Activated T-helper 1 cell treated with anti-CD3 and anti-CD28 coated beads, Interleukin-12 subunit alpha, Interleukin-12 subunit beta, Interleukin-2, Interleukin-4 antibody, amounts not matched to agents 30 ng/mL and 10 ng/mL and 1 ng/mL, durations not matched to agents 14 hours and 24 hours and 36 hours (primary cell): ENCODE measurements at regions of chr10 and their contacts with region 1.

Region 1: GRCh38 chr10:3757638-3758490 is 27.1 kb downstream of the KLF6 start:
- DNase-seq: peak; percentile 66
- H3K4me3 Mint-ChIP-seq: peak overlapping the region; percentile 78
- H3K27ac Mint-ChIP-seq: peak overlapping the region; percentile 100
- H3K4me1 Mint-ChIP-seq: peaks cover 84% of the 10 kb centered on the region
- H3K27me3 Mint-ChIP-seq: no peaks in the 10 kb centered on the region

Region 2: DNA sequence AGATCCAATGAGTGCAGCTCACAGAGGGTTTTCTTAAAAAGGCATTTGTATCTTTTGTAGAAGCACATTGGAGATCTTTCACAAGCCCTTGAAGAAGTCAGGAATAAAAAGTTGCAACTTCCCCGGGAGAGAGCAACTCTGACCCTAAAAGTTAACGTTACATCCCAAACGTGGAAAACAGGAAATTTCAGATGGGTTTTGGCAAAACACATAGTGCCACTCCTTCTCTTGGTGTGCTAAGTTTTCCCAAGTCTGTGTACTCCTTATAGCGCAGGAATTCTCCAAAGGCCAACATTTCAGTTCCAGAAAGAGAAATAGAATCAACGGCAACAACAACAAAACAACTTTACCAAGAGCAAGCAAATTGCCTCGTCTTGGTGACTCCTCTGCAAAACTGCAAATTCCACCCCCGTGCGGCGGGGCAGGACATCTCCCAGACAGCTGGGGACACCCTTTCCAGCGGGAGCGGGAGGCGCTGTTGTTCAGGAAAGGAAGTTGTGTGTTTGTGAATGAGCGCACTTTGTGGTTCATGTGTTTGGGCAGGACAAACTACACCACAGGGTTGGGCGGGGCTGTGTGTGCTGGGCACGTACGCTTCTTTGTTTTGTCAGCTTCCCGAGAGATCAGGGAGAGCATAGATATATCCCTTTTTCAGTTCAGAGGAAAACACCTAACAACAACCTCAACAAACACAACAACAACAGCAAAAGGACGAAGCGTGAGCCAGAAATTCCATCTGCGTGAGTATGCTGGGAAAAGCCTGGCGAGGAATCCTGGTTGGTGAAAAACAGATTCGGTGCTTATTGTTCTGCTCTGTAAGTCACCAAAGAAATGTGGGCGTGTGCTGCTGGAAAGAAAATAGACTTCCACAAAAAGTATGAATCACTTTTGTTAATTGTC is 290.6 kb before region 1 on chr10:
- intact Hi-C with region 1: loop called (anchors 5 kb)
- DNase-seq: no peak
- H3K4me3 Mint-ChIP-seq: peak overlapping the region; percentile 62
- H3K27ac Mint-ChIP-seq: peak overlapping the region; percentile 90
- H3K4me1 Mint-ChIP-seq: peaks cover 53% of the 10 kb centered on the region
- H3K27me3 Mint-ChIP-seq: no peaks in the 10 kb centered on the region

Region 3: DNA sequence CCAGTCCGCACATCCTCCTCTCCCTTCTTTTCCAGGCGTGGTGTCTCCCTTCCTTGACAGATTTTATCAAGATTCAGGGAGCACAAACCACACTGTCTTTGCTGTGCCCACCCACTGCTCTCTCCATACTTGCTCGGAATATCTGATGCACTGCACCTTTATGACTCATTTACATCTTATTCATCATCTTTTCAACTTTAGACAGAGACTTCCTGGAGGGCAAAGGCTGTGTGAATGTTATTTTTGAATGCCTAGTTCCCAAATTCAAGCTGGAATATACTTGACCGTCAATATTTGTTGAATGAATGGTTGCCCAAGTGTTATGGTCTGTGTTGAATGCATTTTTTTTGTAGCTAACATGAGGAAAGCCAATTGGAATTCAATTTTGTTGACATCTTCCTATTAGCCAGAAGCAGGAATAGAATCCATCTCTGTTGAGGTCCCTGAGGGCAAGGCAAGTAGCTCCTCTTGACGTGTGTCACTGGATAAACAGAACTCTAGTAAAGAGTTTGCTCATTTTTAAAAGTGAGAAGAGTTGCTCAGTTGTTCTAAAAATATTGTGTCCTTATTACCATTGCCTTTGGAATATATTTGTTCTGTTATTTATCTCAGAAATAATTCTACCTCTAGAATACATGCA is 67.9 kb before region 1 on chr10:
- intact Hi-C with region 1: loop called (anchors 5 kb)
- DNase-seq: no peak
- H3K4me3 Mint-ChIP-seq: no peak overlapping the region
- H3K27ac Mint-ChIP-seq: peak overlapping the region; percentile 72
- H3K4me1 Mint-ChIP-seq: peaks cover 13% of the 10 kb centered on the region
- H3K27me3 Mint-ChIP-seq: peaks cover 2% of the 10 kb centered on the region

Region 4: DNA sequence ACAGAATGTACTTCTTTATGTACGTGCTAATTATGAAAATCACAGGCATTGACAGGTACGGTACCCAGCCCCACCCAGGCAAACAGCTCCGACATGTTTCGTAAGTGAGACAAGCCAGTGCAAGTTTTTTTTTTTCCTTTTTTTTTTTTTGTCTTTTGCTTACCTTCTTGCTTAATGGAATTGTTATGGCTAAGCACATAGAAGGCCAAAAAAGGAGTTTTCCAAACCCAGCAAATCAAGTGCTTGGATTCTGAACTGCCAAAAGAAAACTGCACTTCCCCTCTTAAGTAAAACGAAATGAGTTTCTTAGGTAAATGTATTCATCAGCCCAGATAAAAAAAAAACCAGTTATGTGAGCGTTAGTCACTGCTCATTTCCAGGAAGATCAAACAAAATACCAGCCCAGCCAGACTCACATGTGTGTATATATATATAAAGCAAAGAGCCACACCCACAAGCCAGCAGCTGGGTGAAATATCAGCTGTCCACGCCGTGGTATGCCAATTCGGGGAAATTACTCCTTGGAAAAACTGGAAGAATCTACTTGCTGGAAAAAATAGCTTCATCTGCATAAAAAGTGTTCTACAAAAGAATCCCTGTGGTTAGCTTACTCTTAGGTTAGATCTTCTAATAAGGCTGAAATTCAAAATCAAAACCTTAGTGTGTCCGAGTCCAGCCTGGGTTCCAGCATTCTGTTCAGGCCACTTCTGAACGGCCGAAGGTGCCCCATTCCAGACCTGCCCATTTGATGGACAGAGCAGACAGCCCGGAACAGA is 19.1 kb after region 1 on chr10:
- intact Hi-C with region 1: loop called (anchors 1 kb)
- DNase-seq: peak; percentile 60
- H3K4me3 Mint-ChIP-seq: peak overlapping the region; percentile 37
- H3K27ac Mint-ChIP-seq: peak overlapping the region; percentile 53
- H3K4me1 Mint-ChIP-seq: peaks cover 81% of the 10 kb centered on the region
- H3K27me3 Mint-ChIP-seq: no peaks in the 10 kb centered on the region

Region 5: DNA sequence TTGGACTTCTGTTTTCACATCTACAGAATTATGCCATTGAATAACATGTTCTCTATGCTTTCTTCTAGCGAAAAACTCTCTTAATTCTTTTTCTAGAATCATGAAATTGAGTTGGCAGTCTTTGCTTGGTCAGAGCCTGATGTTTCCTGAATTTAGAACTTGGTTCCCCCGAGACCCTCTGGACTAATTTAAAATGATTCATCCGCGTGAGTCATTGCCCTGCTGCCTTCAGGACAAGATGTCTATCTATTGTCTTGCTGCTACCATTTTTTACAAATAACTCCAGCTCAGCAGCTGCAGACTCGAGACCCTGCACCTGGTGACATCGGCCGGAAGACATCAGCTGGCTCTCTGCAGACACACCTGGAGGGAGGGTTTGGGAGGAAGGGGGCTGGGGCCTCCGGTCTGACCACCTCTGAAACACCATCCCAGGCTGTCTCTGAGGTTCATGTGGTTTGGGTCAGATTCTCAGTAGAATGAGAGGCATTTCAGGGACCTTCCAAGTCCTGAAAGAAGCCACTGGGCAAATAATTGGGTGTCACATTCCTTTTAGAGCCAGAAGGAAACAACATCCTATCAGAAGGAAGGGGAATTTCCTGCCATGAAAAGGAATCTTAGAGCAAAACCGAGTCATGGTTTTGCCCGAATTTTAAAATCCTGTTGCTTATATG is 48.1 kb after region 1 on chr10:
- intact Hi-C with region 1: loop called (anchors 1 kb)
- DNase-seq: no peak
- H3K4me3 Mint-ChIP-seq: peak overlapping the region; percentile 70
- H3K27ac Mint-ChIP-seq: peak overlapping the region; percentile 99
- H3K4me1 Mint-ChIP-seq: peaks cover 76% of the 10 kb centered on the region
- H3K27me3 Mint-ChIP-seq: no peaks in the 10 kb centered on the region

Region 6: GRCh38 chr10:3873728-3874461 is 116.0 kb after region 1 on chr10:
- intact Hi-C with region 1: loop called (anchors 2 kb)
- DNase-seq: no peak
- H3K4me3 Mint-ChIP-seq: peak overlapping the region; percentile 62
- H3K27ac Mint-ChIP-seq: peak overlapping the region; percentile 97
- H3K4me1 Mint-ChIP-seq: peaks cover 69% of the 10 kb centered on the region
- H3K27me3 Mint-ChIP-seq: no peaks in the 10 kb centered on the region

Region 7: DNA sequence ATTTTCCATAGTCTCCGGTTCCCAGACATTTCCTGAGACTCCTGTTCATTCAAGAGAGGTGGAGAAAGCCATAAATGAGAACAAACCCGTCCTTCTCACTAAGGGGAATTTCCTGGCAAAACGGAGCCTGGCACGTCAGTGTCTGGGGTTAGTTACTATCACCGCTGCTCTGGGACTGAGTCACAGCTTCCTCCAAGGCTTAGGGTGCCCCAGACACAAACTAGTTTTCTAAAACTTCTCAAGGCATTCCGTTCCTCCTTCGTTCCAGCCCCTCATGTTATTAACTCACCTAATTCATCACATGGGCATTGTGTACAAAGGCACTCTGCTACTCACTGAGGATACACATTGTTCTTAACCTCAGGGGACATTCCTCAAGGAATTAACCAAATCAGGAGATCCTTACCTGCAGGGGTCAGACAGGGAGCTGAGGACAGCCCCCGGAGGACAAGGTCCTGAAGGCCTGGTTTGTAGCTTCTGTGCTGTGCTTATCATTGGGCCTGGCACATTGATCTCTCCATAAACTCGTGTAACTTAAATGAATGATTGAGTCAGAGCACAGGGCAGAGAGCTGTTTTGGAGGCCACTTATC is 130.1 kb after region 1 on chr10:
- intact Hi-C with region 1: no loop called
- DNase-seq: peak; percentile 48
- H3K4me3 Mint-ChIP-seq: peak overlapping the region; percentile 20
- H3K27ac Mint-ChIP-seq: peak overlapping the region; percentile 76
- H3K4me1 Mint-ChIP-seq: peaks cover 38% of the 10 kb centered on the region
- H3K27me3 Mint-ChIP-seq: no peaks in the 10 kb centered on the region

Region 8: GRCh38 chr10:4656576-4657182 is 898.8 kb after region 1 on chr10:
- intact Hi-C with region 1: loop called (anchors 10 kb)
- DNase-seq: no peak
- H3K4me3 Mint-ChIP-seq: no peak overlapping the region
- H3K27ac Mint-ChIP-seq: no peak overlapping the region
- H3K4me1 Mint-ChIP-seq: peaks cover 10% of the 10 kb centered on the region
- H3K27me3 Mint-ChIP-seq: peaks cover 18% of the 10 kb centered on the region